Motor neuron (in vitro differentiated cells): ENCODE measurements at regions of chr5 and their contacts with region 1.

Region 1: DNA sequence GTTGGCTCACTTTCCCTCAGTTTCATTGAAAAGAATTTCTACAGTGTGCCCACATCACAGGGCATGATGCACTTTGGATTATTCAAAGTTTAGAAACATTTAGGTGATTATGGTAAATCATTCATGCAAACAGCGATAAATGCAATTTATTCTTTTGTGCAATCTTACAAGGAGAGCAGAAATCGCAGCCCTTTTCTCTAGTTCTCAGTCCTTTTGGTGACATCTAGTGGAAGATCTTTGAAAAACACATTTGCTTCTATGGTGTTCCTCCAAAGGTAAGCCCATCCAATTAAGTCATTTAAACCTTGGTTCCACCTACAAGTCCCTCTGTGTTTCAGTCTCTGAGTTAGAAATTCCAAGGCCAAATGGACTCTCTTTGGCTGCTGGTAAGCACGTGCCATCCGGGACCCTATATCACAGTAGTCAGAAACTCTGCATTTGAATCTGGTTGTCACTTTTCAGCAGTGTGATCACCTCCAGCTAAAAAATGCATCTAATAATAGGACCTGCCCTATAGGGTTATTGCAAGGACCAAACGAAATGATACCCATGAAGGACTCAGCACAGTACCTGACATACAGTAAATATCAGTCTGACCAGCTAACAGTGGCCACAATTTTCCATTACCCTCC is 66.4 kb downstream of the MACROH2A1 start:
- ATAC-seq: peak; percentile 19 to 69 (median 40)
- H3K4me3 ChIP-seq: no peak overlapping the region
- H3K27ac ChIP-seq: no peak overlapping the region
- H3K4me1 ChIP-seq: peaks cover 18% of the 10 kb centered on the region in 2 donors

Region 2: GRCh38 chr5:134975078-134975715 is 357.4 kb before region 1 on chr5:
- in situ Hi-C with region 1: no loop called
- ATAC-seq: no peak
- H3K4me3 ChIP-seq: no peak overlapping the region
- H3K27ac ChIP-seq: no peak overlapping the region
- H3K4me1 ChIP-seq: no peaks in the 10 kb centered on the region

Region 3: GRCh38 chr5:135034236-135034962 is 298.2 kb before region 1 on chr5:
- in situ Hi-C with region 1: loop called in 1 of 9 experiments (anchors 25 kb)
- ATAC-seq: peak; percentile 40 to 91 (median 87)
- H3K4me3 ChIP-seq: peak overlapping the region; percentile 23 to 45 (median 40)
- H3K27ac ChIP-seq: peak overlapping the region in 1 of 2 donors; percentile 26
- H3K4me1 ChIP-seq: peaks cover 4 to 12% of the 10 kb centered on the region in 2 donors